ENCODE measurements at regions of chr14 and their contacts with region 1.

Region 1: GRCh38 chr14:96100161-96101029 is 61.2 kb downstream of the C14orf132 start:
- DNase-seq: no peak
- ATAC-seq: no peak

Region 2: DNA sequence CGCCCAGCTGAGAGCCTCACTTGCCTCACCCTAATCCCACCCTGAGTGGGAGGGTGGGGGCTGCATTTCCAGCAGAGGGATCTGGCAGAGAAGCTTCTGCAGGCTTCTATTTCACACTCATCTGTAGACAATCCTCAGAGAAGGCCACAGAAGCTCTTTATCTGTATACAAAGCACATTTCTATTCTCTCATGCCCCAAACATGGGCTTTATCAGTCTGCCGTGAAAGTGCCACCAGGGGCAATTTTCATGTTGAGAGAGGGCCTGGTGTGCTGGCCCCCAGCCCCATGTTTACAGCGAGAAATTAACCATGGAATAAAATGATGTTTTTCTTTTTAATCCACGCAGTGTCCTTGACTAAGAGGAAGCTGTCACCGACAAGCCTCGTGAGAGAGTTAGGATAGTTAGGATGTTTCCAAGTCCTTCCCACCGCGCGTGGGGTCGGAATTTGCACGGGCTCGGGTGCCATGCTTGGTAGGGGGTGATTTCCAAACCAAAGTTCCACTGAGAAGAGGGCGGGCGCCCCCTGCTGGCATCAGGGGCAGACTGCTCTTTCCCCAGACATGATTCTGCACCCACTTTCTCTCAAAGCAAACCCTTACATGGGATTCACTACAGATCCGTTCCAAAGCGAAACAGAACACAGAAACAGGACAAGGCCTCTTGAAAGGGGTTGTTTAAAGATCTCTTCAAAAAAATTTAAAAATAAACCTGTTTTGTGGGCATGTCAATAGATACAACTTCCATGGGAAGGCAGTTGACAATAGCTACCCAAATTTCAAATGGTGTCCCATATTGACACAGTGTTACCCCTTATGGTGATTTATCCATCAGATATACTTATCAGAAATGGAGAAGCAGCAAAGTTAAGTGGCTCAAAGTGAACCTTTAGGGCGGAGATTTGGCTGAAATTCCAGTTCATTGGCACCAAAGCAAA is 175.1 kb after region 1 on chr14:
- intact Hi-C with region 1: loop called (anchors 1 kb)
- DNase-seq: peak; percentile 79
- ATAC-seq: peak; percentile 38